Caco-2 (cell line): ENCODE measurements at regions of chr7 and their contacts with region 1.

Region 1: GRCh38 chr7:132394283-132395198 is 181.7 kb downstream of the PLXNA4 start:
- DNase-seq: peak in 1 of 2 experiments; percentile 37
- H3K4me3 ChIP-seq: no peak overlapping the region
- H3K4me3 Mint-ChIP-seq: no peak overlapping the region
- H3K27ac Mint-ChIP-seq: no peak overlapping the region
- H3K4me1 ChIP-seq: no peaks in the 10 kb centered on the region
- H3K4me1 Mint-ChIP-seq: no peaks in the 10 kb centered on the region
- H3K27me3 ChIP-seq: no peaks in the 10 kb centered on the region; the same call in 1 of the 2 replicates
- H3K27me3 Mint-ChIP-seq: peaks cover 8% of the 10 kb centered on the region
- CTCF ChIP-seq: peak in 1 of 2 experiments; percentile 40

Region 2: DNA sequence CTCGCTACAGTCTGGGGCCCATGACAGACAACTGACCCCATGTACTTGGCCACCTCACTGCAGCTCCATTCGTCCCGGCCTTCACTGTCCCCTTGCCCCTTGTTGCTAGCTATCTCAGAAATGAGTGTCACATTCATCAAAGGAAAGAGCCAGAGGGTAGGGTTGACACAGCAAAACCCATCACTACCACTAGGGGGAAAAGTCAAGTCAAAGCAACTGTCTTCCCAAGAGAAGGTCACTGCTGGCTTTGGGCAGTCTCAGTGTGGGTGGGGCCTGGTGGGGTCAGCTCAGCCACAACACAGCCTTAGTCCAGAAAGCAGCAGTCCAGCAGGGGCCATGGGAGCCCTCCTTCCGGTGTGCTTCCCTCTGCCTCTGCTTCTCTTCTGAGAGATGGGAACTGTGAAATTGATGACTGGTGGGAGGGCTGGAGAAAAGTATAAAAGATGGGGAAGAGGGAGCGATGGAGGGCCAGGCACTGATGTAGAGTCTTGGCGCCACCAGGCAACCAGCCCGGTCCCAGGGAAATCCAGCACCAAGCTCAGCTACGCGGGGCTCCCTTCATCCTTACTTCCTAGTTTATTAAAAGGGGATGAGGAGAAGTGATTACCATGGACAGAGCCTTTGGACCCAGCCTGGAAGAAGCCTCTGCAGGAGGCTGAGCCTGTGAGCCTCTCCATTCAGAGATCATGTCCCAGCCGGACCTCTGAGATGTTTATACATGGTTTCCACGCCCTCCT is 123.7 kb after region 1 on chr7:
- CTCF ChIA-PET with region 1: no interaction called
- POLR2A ChIA-PET with region 1: no interaction called
- intact Hi-C with region 1: loop called (anchors 5 kb)
- DNase-seq: peak in 1 of 2 experiments; percentile 51
- H3K4me3 ChIP-seq: no peak overlapping the region
- H3K4me3 Mint-ChIP-seq: no peak overlapping the region
- H3K27ac Mint-ChIP-seq: no peak overlapping the region
- H3K4me1 ChIP-seq: no peaks in the 10 kb centered on the region
- H3K4me1 Mint-ChIP-seq: no peaks in the 10 kb centered on the region
- H3K27me3 ChIP-seq: no peaks in the 10 kb centered on the region; the same call in none of the 2 replicates
- H3K27me3 Mint-ChIP-seq: peaks cover 19% of the 10 kb centered on the region
- CTCF ChIP-seq: peak; percentile 53

Region 3: DNA sequence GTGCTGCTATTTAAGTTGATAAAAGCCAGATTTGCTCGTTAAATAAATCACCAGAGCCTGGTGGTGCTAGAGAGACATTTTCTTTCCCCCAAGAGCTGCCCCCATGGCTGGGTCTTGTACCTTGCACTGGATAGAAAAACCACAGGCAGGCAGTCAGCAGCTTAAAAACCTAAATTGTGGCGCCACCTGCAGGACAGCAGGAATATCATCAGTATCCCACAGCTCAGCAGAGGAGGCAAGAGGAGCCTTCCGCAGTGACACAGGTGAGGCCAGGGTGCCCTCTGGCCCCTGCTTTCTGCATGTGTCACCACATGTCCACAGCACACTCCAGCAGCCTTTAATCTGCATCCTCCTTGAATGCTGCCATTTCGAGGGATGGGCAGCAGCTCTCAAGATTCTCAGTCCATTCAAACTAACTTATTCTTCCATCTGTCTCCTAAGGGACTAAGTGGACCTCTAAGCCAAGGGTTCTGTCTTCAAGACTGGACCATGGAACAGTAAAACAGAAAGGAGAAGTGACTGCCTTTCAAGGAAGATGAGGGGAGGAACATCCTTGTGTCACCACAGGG is 186.3 kb after region 1 on chr7:
- CTCF ChIA-PET with region 1: interaction called, 26 read pairs
- POLR2A ChIA-PET with region 1: no interaction called
- intact Hi-C with region 1: loop called (anchors 1 kb)
- DNase-seq: peak; percentile 78 to 80
- H3K4me3 ChIP-seq: no peak overlapping the region
- H3K4me3 Mint-ChIP-seq: no peak overlapping the region
- H3K27ac Mint-ChIP-seq: no peak overlapping the region
- H3K4me1 ChIP-seq: peaks cover 5% of the 10 kb centered on the region; the same call in 1 of the 2 replicates
- H3K4me1 Mint-ChIP-seq: no peaks in the 10 kb centered on the region
- H3K27me3 ChIP-seq: peaks cover 1% of the 10 kb centered on the region
- H3K27me3 Mint-ChIP-seq: peaks cover 27% of the 10 kb centered on the region
- CTCF ChIP-seq: peak; percentile 76 to 83